ENCODE measurements at regions of chr1 and their contacts with region 1.

Region 1: DNA sequence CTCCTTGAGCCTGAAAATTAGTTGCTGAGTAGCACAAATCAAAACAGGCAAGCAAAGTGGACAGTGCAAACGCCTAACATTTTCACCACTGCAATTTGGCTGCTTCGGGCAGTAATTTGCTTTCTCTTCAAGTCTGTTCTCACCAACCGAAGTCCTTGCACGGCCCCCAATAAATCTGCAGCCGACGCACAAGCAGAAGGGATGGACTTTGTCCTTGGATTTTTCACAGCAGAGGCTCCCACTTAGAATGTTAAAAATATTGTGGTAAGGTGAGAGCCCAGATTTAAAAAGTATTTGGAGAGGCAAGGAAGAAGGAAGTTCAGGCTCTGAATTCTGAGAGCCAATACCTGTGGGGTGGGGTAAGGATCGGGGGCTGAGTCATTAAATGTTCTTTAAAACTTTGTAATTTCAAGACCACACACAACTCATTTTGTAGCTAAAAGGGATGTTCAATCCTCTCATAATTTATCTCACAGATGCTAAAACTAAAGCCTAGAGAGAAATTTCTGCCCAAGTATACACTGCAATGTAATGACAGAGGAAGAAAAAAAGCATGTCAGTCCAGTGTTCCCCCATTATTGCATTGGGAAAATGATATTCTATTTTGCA is 6.2 kb downstream of the CD247 start:
- DNase-seq: peak; percentile 45
- ATAC-seq: peak; percentile 28
- H3K4me3 Mint-ChIP-seq: peak overlapping the region; percentile 68
- H3K27ac Mint-ChIP-seq: peak overlapping the region; percentile 73
- H3K4me1 Mint-ChIP-seq: peaks cover 77% of the 10 kb centered on the region
- H3K27me3 Mint-ChIP-seq: no peaks in the 10 kb centered on the region

Region 2: DNA sequence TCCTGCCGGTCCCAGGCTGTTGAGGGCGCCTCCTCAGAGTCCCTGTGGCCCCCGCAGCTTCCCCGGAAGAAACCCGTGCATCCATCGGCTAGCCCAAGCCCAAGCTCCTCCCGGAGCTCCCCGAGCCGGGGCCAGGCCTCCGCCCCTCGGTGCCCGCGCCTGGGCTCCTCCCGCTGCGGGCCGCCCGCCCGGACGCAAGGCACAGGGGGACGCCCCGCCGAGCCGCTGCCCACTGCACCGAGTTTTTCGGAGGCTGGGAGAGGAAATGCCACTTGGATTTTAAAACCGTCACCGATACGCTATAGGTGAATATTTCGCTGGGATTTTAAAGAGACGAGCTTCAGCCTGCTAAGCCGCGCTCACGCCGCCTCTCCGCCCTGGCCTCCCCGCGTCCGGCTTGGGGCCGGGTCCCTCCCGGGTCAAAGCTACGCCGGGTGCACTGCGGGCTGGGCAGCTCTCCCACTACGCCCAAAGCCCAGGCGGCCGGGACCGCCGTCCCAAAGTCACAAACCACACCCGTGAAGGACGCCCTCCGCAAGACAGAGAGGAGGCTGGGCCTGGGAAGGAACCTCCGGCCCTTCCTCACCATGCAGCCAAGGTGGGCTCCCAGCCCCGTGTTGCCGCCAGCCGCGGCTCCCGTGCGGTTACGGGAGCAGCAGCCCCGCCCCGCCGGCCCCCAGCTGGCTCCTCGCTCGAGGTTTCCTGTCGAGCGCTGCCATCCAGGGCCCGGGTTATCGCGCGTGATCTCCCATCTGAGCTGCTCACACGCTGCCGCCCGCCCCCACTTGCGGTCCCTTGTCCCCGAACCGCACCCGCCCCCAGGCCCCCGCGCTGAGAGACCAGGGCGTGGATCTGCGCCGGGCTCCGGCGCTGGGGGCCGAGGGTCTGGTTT is 57.0 kb before region 1 on chr1:
- CTCF ChIA-PET with region 1: interaction called, 28 read pairs
- POLR2A ChIA-PET with region 1: interaction called, 16 read pairs
- intact Hi-C with region 1: loop called (anchors 2 kb)
- DNase-seq: peak; percentile 88
- ATAC-seq: peak; percentile 58
- H3K4me3 Mint-ChIP-seq: peak overlapping the region; percentile 75
- H3K27ac Mint-ChIP-seq: peak overlapping the region; percentile 86
- H3K4me1 Mint-ChIP-seq: peaks cover 78% of the 10 kb centered on the region
- H3K27me3 Mint-ChIP-seq: no peaks in the 10 kb centered on the region

Region 3: DNA sequence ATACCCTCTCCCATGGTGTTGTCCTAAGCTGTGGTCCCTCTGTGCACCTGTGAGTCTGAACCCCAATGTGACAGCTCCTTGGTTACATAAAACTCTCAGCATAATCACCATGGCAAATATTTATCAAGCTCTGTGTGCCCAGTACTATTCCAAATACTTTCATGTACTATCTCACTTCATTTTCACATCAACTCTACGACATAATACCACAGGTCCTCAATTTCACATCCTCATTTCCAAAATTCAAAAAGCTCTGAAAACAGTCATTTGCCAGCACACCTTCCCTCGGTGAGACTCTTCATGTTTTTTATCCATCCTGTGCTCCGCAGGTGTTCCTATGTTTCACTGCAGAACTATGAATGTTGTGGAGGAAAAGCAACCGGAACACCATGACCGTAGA is 53.8 kb after region 1 on chr1:
- CTCF ChIA-PET with region 1: no interaction called
- POLR2A ChIA-PET with region 1: no interaction called
- intact Hi-C with region 1: no loop called
- DNase-seq: no peak
- ATAC-seq: no peak
- H3K4me3 Mint-ChIP-seq: no peak overlapping the region
- H3K27ac Mint-ChIP-seq: no peak overlapping the region
- H3K4me1 Mint-ChIP-seq: no peaks in the 10 kb centered on the region
- H3K27me3 Mint-ChIP-seq: no peaks in the 10 kb centered on the region